ENCODE measurements at regions of chr7 and their contacts with region 1.

Region 1: DNA sequence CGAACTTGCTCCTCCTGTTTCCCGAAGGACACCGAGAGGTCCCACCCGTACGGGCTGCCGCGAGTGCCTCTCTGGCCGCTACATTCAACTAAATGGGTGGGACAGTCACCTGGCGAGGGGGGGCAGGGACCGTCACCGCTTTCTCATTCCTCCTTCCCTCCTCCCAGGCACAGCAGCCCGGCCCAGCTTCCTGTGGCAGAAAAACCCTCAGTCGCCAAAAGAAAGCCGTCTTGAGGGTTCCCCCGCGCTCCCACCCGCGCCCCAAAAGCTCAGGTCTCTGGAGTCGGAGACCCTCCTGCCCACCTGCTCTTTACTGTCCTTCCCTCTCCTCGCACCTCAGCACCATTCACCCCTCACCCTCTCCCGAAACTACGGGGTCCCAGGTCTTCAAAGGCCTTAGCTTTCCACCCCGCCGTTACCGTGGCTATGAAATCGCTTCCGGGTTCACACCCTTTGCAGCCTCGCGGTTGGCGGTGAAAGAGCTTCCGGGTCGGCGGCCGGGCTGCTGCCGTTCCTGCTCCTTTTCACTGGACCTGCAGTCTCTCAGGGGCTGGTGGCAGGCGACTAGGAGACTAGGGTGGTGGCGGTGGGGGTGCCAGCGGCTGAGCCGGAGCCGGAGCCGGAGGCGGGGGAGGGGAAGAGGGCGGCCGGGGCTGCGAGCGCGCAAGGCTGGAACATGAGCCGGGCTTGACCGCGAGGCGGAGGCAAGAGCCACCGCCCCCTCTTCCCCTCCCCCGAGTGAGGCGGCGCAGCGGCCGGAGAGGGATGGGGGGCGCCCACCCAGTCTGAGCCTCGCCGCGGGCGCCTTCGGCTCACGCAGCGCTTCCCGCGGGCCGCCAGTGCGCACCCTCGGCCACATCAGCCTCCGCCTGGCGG is at the starts of genes ANKIB1 and KRIT1:
- DNase-seq: peak; percentile 79
- ATAC-seq: peak; percentile 84
- H3K4me3 Mint-ChIP-seq: peak within 1 kb of the TSS; percentile 100
- H3K27ac Mint-ChIP-seq: peak within 1 kb of the TSS; percentile 99
- H3K4me1 Mint-ChIP-seq: peaks cover 40% of the 10 kb centered on the region
- H3K27me3 Mint-ChIP-seq: no peaks in the 10 kb centered on the region
- CTCF ChIP-seq: no peak
- total RNA-seq, gene ANKIB1: 42.5 and 50.6 TPM in 2 replicates
- total RNA-seq, gene KRIT1: 53.4 and 61.1 TPM in 2 replicates

Region 2: DNA sequence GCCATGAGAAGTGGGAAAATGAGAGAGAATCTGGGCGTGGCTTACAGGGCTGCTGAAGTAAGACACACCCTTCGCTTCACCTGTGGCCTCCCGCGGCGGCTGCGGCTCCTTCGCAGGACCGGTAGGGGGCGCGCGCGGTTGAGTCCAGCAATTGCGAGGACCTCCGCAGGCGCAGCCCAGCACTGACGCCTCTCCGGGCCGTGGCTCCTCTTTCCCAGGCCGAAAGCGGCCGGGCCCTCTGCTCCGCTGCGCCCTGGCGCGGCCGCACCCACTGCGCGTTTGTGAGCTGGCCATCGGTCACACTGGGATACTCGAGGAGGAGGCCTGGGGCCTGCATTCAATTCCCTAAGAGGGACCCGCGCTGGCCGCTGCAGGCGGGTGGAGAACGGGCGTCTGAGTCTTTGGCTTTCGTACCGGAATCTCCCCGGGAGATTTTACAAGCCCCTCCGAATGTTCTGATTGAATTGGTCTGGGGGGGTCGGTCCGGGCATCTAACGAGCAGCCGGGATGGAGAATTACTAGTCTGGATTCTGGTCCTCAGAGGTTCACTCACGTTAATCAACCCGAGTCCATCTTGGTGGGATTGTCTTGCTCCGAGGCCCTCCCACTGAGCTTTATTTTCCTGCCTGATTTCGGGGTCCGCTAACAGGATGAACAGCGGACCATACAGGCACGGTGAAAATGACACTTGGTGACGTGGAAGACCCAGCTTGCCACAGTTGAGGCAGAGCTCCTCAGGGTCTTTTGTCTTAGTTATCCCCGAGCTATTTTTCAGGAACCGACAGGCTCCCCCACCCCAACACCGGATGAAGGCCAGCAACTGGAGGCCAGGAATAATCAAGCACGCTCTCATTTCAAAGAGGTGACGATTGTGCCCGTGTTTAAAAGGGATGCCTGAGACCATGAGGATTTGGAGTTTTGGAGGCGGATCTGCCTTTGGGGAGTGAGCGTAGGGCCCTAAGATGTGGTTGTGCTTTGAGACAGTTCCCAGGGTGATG is 66.5 kb before region 1 on chr7 and contains the start of gene LRRD1:
- CTCF ChIA-PET with region 1: interaction called, 3 read pairs
- POLR2A ChIA-PET with region 1: interaction called, 7 read pairs
- intact Hi-C with region 1: loop called (anchors 2 kb)
- DNase-seq: peak; percentile 90
- ATAC-seq: peak; percentile 100
- H3K4me3 Mint-ChIP-seq: peak within 1 kb of the TSS; percentile 82
- H3K27ac Mint-ChIP-seq: no peak within 1 kb of the TSS
- H3K4me1 Mint-ChIP-seq: peaks cover 11% of the 10 kb centered on the region
- H3K27me3 Mint-ChIP-seq: no peaks in the 10 kb centered on the region
- CTCF ChIP-seq: no peak
- total RNA-seq, gene LRRD1: not detected in 2 replicates

Region 3: GRCh38 chr7:92226981-92227380 is 18.7 kb before region 1 on chr7:
- CTCF ChIA-PET with region 1: no interaction called
- POLR2A ChIA-PET with region 1: no interaction called
- intact Hi-C with region 1: no loop called
- DNase-seq: no peak
- ATAC-seq: no peak
- H3K4me3 Mint-ChIP-seq: no peak overlapping the region
- H3K27ac Mint-ChIP-seq: no peak overlapping the region
- H3K4me1 Mint-ChIP-seq: no peaks in the 10 kb centered on the region
- H3K27me3 Mint-ChIP-seq: no peaks in the 10 kb centered on the region
- CTCF ChIP-seq: no peak

Region 4: GRCh38 chr7:92292981-92293380 is 47.3 kb after region 1 on chr7:
- CTCF ChIA-PET with region 1: no interaction called
- POLR2A ChIA-PET with region 1: interaction called, 6 read pairs
- intact Hi-C with region 1: loop called (anchors 5 kb)
- DNase-seq: no peak
- ATAC-seq: no peak
- H3K4me3 Mint-ChIP-seq: no peak overlapping the region
- H3K27ac Mint-ChIP-seq: no peak overlapping the region
- H3K4me1 Mint-ChIP-seq: peaks cover 29% of the 10 kb centered on the region
- H3K27me3 Mint-ChIP-seq: no peaks in the 10 kb centered on the region
- CTCF ChIP-seq: no peak

Region 5: GRCh38 chr7:92461027-92462003 is 215.6 kb after region 1 on chr7:
- CTCF ChIA-PET with region 1: no interaction called
- POLR2A ChIA-PET with region 1: no interaction called
- intact Hi-C with region 1: no loop called
- DNase-seq: no peak
- ATAC-seq: peak; percentile 50
- H3K4me3 Mint-ChIP-seq: no peak overlapping the region
- H3K27ac Mint-ChIP-seq: no peak overlapping the region
- H3K4me1 Mint-ChIP-seq: no peaks in the 10 kb centered on the region
- H3K27me3 Mint-ChIP-seq: no peaks in the 10 kb centered on the region
- CTCF ChIP-seq: no peak

Region 6: DNA sequence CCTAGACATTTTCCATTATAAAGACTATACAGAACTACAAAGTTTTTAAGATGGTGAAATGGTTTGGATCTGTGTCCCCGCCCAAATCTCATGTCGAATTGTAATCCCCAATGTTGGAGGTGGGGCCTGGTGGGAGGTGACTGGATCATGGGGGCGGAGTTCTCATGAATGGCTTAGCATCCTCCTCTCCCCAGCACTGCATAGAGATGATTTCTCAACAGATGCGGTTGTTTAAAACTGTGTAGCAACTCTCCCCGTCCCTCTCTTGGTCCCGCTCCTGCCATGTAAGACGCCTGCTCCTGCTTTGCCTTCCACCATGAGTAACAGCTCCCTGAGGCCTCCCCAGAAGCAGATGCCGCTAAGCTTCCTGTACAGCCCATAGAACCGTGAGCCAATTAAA is 342.8 kb after region 1 on chr7:
- CTCF ChIA-PET with region 1: no interaction called
- POLR2A ChIA-PET with region 1: no interaction called
- intact Hi-C with region 1: loop called (anchors 1 kb)
- DNase-seq: no peak
- ATAC-seq: no peak
- H3K4me3 Mint-ChIP-seq: peak overlapping the region; percentile 80
- H3K27ac Mint-ChIP-seq: peak overlapping the region; percentile 80
- H3K4me1 Mint-ChIP-seq: peaks cover 59% of the 10 kb centered on the region
- H3K27me3 Mint-ChIP-seq: no peaks in the 10 kb centered on the region
- CTCF ChIP-seq: no peak